ENCODE measurements at regions of chr17 and their contacts with region 1.

Region 1: DNA sequence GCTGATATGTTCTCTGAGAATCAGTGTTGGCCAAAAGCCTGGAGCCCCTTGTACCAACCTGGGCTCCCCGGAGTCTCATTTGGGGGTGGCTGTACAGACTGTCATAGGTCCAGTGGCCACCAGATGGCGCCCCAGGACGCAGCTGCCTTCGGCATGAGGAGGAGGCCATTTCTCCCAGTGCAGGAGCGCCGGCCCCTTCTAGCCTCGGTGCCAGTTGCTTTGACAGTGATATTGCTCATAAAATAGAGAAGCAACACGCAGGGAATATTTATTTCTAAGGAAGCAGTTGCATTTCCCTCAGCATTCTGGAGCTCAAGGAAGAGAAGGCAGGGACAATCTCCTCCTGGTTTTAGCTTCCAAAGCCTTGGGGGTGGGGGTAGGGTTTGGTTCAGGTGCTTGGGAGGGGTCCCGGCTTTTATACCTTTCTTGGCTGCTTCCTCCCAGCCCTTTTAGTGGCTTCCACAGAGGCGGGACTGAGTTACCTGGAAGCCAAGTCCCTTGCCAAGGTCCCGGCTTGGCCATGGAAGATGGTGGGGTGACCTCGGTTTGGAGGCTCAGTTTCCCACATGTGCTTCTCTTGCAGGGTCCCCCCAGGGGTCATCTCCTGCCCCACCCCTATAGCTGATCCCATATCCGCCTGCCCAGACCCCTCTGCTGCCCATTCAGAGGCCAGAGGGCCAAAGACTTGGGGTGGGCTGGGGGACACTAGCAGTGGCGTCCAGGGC is 117.8 kb upstream of the CDC42EP4 start:
- DNase-seq: peak; percentile 91

Region 2: DNA sequence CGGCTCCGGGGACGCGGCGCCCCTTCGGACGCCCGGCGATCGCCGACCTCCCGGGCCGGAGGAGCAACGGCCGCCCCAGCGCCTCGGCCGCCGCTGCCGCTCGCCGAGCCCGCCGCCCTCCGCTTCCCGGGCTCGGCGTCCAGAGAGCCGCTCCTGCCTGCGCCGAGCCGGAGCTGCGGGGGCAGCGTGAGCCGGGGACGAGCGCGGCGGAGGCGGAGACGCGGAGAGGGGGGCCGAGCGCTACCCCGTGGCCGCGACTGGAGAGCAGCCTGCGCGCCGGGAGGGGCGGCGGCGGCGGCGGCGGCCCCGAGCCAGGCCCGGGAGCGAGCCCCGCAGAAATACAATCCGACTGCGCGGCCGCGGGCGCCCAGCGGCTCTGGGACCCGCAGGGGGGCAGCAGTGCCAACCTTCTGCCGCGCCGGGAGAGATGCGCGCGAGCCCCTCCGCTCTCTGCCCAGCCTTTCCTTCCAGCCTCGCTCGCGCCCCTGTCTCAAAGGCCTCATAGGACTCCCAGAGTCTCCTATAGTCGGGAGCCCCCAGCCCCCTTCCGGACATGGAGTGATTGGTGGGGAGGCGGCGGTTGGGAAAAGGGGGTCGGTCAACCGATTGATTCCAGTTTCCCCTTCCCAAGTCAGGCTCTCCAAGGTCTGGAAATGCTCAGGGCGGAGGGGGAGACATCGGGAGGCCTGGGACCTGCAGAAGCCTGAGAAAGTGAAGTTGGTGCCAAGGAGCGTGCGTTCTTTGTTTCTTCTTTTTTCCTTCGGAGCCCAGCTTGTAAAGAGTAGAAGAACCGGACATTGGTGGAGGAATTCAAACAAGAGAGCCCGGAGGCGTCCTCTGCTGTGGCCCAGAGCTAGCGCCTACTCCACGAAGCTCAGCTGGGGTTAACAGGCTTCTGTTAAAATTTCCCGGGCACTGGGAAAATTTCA is 215.7 kb after region 1 on chr17:
- intact Hi-C with region 1: loop called (anchors 2 kb)
- DNase-seq: no peak

Region 3: DNA sequence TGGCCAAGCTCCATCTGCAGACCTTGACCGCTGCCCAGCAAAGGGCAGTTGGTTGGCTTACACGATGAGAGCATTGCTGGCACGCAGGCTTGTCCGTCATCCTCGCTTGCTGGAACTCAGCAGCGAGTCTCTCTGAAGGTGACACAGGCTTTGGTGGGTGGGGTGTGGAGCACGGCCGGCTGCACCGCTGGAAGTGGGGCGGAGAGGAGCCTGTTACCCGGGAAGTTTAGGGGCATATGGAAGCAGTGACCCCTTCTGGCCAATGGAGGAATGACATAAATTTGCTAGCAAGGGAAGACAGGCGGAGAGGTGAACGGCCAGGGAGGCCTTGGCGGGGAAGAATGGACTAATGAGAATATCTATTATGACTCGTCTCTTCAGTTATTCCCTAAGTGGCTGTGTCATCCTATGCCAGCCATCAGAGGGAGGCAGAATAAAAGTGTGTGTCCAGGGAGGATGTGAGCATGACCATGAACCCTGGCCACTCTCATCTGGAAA is 280.5 kb after region 1 on chr17:
- intact Hi-C with region 1: loop called (anchors 2 kb)
- DNase-seq: peak; percentile 80

Region 4: GRCh38 chr17:73841431-73842060 is 411.9 kb after region 1 on chr17:
- intact Hi-C with region 1: loop called (anchors 5 kb)
- DNase-seq: no peak

Region 5: DNA sequence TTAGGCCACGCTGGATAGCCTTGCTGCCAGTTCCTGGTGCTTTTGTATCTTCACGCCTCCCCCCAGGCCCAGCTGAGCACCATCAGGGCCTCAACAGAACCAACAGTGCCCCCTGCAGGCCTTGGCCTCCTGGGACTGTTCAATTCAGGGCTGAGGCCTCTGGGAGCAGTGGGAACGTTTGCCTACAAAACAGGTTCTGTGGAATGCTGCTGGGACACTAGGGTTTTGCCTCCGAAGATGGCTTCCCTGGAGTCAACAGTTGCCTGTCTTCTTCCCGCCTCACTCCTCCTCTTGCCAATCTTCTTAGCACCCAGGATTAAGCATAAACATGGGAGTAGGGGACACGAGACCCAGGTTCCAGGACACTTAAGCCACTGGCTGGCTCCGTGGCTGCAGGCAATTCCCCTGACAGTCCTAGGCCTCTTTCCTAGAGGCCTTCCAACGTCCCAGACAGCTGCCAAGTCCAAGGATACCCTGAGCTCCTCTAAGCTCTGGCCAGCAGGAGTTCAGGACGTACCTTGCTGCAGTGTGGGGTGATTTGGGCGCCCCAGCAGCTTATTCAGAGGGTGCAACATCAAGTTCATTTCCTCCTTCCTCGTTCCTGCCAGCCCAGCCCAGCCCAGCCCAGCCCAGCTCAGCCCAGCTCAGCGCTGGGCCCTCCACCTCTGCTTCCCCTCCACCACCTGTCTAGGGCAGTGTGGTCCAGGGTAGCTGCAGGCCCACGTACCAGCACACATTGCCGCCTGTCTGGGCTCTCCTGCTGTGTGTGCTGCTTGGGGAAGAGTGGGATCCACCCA is 527.3 kb after region 1 on chr17:
- intact Hi-C with region 1: loop called (anchors 10 kb)
- DNase-seq: no peak

Region 6: DNA sequence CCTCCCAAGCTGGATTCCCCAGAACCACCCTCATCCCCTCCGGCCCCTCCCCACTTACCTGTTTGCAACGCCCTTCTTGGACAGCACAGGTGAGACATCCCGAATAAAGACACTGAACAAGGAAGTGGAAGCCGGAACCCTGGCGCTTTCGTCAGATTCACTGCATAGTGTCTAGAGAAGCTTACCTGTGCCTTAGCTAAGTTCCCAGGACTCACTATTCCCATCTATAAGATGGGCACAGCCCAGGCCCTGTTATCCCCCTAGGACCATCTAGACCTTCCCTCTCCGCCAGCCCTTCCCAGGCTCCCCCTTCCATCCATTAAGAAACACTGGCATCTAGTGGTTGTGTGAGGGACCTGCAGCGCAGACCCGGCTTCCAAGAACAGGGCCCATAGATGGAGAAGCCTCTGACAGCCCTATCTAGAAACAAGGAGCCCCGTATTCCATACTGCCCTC is 747.0 kb after region 1 on chr17:
- intact Hi-C with region 1: loop called (anchors 2 kb)
- DNase-seq: no peak

Measured in cardiac septum (tissue), 1 donor.